Sigmoid colon (tissue), 7 donors: ENCODE measurements at regions of chr1 and their contacts with region 1.

Region 1: DNA sequence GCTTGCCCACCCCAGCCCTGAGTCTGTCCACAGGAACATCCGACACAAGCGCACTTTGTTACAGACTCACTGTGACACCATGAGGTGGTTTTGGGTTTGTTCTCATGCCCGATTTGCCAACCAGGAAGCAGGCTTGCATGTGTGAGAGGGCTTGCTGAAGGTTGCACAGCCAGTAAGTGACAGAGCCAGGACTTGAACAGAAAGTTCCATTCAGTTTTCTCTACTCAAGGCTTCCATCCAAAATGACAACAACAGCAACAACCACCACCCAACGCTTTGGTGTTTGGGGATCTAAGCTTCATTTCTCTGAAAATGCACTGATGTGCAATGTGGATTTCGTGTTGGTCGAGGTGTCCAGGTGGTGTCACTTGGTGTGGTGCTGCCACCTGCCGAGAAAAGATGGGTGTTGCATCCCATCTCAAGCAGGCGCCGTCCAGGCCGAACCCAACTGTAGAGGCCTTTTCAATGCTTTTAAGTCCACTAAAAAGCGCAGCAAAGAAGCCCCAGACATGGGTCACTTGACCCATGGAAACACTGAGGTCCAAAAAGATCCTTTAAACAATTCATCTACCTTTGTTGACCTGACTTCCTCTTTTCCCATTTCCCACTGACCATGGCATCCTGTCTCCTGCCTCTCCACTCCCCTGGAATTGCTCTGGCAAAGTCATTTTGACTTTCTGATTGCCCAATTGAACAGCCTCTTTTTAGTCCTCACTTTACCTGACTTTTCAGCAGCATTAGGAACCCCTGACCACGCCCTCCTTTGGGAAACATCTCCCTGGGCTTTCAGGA is 12.2 kb downstream of the CITED4 start:
- DNase-seq: peak; percentile 85
- H3K4me3 ChIP-seq: no peak overlapping the region
- H3K27ac ChIP-seq: peak overlapping the region in 1 of 4 donors; percentile 27
- H3K4me1 ChIP-seq: peaks cover 0 to 31% (median 12%) of the 10 kb centered on the region in 4 donors
- H3K27me3 ChIP-seq: no peaks in the 10 kb centered on the region
- CTCF ChIP-seq: peak; percentile 83 to 90 (median 84)
- EP300 ChIP-seq: no peak
- POLR2A ChIP-seq: no peak

Region 2: GRCh38 chr1:40241362-40241761 is 608.6 kb before region 1 on chr1:
- intact Hi-C with region 1: no loop called
- DNase-seq: no peak
- H3K4me3 ChIP-seq: no peak overlapping the region
- H3K27ac ChIP-seq: no peak overlapping the region
- H3K4me1 ChIP-seq: no peaks in the 10 kb centered on the region
- H3K27me3 ChIP-seq: no peaks in the 10 kb centered on the region
- CTCF ChIP-seq: no peak
- EP300 ChIP-seq: no peak
- POLR2A ChIP-seq: no peak

Region 3: DNA sequence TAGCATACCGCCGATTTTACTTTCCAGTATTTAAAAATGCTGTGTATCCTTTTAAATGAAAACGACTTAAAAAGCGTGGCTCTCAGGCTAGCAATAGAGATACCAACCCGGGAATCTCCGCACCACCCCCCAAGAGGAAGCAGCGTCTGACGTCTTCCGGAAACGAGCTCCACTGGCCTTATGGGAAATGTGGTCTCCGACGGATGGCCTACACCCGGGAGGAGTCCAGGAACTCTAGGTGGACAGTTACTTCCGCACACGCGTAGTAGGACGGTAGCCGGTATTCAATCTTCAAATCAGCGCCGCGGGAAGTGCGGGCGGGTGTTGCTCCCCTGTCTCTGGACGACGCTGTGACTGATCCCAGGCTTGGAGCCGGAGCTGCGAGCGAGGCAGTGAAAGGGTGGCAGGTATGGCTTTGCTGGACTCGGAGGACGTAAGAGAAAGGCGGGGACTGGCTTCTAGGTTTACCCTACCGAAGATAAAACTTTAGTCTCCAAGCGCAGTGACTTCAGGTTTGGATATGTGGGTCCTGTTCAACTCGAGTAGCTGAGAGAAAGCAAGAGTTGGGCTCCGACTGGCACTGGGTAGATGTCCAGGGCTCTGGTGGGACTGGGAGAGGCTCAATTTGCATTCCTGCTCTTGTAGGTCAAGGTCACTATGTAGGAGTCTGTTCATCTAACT is 318.5 kb before region 1 on chr1 and contains the start of gene ZNF684:
- intact Hi-C with region 1: loop called (anchors 10 kb)
- DNase-seq: peak; percentile 94
- H3K4me3 ChIP-seq: peak within 1 kb of the TSS; percentile 63 to 82 (median 72)
- H3K27ac ChIP-seq: peak within 1 kb of the TSS; percentile 77 to 89 (median 84)
- H3K4me1 ChIP-seq: peaks cover 0 to 18% (median 13%) of the 10 kb centered on the region in 4 donors
- H3K27me3 ChIP-seq: no peaks in the 10 kb centered on the region
- CTCF ChIP-seq: no peak
- EP300 ChIP-seq: peak in 1 of 4 donors; percentile 52
- POLR2A ChIP-seq: peak; percentile 31 to 56
- total RNA-seq, gene ZNF684: 2.2 to 6.1 (median 3.7) TPM

Region 4: DNA sequence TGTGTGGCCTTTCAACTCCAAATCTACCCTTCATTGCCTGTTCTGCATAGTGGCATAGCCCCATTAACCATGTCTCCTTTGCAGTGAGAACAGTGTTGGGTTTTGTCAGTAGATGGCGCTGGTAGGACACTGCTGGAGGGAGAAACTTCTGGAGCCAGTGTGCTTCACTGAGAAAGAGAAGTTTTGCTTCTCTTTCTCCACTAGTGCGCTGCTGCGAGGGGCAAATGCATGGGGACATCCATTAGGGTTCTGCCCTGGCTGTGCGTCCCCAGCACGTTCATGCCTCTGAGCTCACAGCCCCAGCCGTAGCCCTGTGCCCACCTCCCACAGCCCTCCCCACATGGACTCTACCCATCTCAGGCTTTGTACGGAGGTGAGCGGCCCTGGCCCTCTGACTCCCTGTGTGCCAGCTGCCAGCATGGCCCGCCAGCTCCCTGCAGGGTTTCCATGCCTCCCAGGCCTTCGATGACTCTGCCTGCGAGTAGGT is 237.6 kb before region 1 on chr1:
- intact Hi-C with region 1: loop called (anchors 2 kb)
- DNase-seq: no peak
- H3K4me3 ChIP-seq: no peak overlapping the region
- H3K27ac ChIP-seq: no peak overlapping the region
- H3K4me1 ChIP-seq: no peaks in the 10 kb centered on the region
- H3K27me3 ChIP-seq: no peaks in the 10 kb centered on the region
- CTCF ChIP-seq: peak; percentile 65 to 80 (median 74)
- EP300 ChIP-seq: no peak
- POLR2A ChIP-seq: no peak

Region 5: DNA sequence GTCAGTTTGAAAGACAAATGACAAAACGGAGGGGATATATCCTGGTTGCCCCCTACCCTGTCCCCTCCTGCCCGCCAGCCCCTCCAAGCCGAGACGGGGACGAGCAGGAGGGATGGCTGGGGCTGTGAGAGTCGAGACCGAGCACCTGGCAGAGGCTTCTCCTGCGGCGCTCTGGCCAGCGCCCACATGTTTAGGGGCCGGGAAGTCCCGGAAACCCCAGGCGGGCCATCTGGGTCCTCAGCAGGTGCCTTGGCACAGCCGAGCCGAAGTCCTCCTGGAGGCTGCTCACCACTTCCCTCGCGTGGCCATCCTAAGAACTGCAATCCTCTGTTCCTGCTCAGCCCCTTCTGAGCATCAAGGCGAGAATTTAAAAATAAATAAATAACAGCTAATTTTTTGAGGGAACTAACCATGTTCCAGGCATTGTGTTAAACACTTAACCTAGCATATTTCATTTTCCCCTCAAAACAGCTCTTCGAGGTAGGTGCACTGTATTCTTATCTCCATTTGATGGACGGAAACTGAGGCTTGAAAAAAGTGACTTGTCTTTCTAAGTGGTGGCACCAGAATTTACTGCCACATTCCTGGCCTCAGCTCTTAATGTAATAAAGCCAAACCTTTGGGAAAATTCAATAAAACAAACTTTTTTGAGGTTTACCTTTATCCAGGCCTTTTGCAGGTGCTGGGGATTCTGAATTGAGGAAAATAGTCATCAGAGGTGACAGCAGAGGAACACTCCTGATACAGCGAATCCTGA is 181.1 kb before region 1 on chr1:
- intact Hi-C with region 1: loop called (anchors 5 kb)
- DNase-seq: peak; percentile 86
- H3K4me3 ChIP-seq: peak overlapping the region in 2 of 4 donors; percentile 21 to 27
- H3K27ac ChIP-seq: no peak overlapping the region
- H3K4me1 ChIP-seq: peaks cover 0 to 26% (median 23%) of the 10 kb centered on the region in 4 donors
- H3K27me3 ChIP-seq: no peaks in the 10 kb centered on the region
- CTCF ChIP-seq: peak; percentile 62 to 97 (median 82)
- EP300 ChIP-seq: no peak
- POLR2A ChIP-seq: no peak

Region 6: GRCh38 chr1:40774266-40774998 is 75.6 kb before region 1 on chr1:
- intact Hi-C with region 1: loop called (anchors 2 kb)
- DNase-seq: peak; percentile 76
- H3K4me3 ChIP-seq: no peak overlapping the region
- H3K27ac ChIP-seq: peak overlapping the region in 3 of 4 donors; percentile 31 to 52 (median 50)
- H3K4me1 ChIP-seq: peaks cover 0 to 17% (median 13%) of the 10 kb centered on the region in 4 donors
- H3K27me3 ChIP-seq: no peaks in the 10 kb centered on the region
- CTCF ChIP-seq: peak; percentile 33 to 84 (median 68)
- EP300 ChIP-seq: no peak
- POLR2A ChIP-seq: no peak

Region 7: GRCh38 chr1:40951943-40952743 is 102.1 kb after region 1 on chr1:
- intact Hi-C with region 1: loop called (anchors 1 kb)
- DNase-seq: peak; percentile 87
- H3K4me3 ChIP-seq: no peak overlapping the region
- H3K27ac ChIP-seq: no peak overlapping the region
- H3K4me1 ChIP-seq: peaks cover 0 to 21% (median 15%) of the 10 kb centered on the region in 4 donors
- H3K27me3 ChIP-seq: no peaks in the 10 kb centered on the region
- CTCF ChIP-seq: peak; percentile 86 to 95 (median 90)
- EP300 ChIP-seq: no peak
- POLR2A ChIP-seq: no peak